Mammary epithelial cell (primary cell): ENCODE measurements at regions of chr21 and their contacts with region 1.

Region 1: GRCh38 chr21:33924079-33924765 is 8.6 kb upstream of the ATP5PO start:
- DNase-seq: peak; percentile 52
- H3K4me3 ChIP-seq: no peak overlapping the region
- H3K27ac ChIP-seq: no peak overlapping the region
- H3K4me1 ChIP-seq: peaks cover 9% of the 10 kb centered on the region
- H3K27me3 ChIP-seq: no peaks in the 10 kb centered on the region
- CTCF ChIP-seq: peak; percentile 92 to 95

Region 2: DNA sequence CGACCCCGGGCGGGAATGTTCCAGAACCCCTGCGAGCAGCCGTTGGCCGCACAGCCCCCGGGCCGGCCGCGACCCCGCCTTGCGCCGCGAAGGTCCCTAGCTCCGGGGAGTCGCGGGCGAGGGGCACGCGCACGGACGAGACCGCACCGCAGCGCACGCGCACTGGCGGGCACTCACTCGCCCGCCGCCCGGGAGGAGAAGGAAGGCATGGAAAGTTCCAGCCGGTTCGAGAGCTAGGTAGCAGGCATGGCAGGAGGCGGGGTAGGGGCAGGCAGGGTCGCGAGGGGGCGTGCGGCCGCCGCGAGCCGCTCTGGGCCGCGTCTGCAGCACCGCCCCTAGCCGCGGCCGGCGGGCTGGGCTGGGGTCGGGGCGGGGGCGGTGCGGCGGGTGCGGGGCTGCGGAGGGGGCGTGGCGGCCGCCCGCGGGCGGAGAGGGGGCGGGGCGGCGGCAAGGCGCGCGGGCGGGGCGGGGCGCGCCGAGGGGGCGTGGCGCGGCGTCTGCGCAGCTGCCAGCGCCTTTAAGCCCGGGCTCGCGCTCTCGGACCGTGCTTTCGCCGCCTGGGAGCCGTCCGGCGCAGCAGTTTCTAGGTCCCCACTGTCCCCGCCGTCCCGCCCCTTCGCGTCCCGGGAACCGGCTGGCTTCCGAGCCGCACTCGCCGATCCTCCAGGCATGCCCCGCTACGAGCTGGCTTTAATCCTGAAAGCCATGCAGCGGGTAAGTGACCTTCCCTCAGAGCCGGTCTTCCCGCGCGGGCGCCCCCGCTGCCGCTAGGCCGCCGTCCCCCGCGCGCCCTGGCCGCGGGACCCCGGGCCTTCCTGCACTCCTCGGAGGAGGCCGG is 149.0 kb after region 1 on chr21 and contains the starts of genes MRPS6 and SLC5A3:
- CTCF ChIA-PET with region 1: no interaction called
- dilution Hi-C with region 1: no loop called
- in situ Hi-C with region 1: no loop called
- intact Hi-C with region 1: loop called (anchors 2 kb)
- DNase-seq: peak; percentile 76
- H3K4me3 ChIP-seq: peak within 1 kb of the TSS; percentile 88 to 90 (median 88)
- H3K27ac ChIP-seq: peak within 1 kb of the TSS; percentile 75
- H3K4me1 ChIP-seq: peaks cover 21% of the 10 kb centered on the region
- H3K27me3 ChIP-seq: no peaks in the 10 kb centered on the region
- CTCF ChIP-seq: no peak
- total RNA-seq, gene MRPS6: 10.2 to 65.9 TPM
- total RNA-seq, gene SLC5A3: 10.8 to 17.5 TPM

Region 3: DNA sequence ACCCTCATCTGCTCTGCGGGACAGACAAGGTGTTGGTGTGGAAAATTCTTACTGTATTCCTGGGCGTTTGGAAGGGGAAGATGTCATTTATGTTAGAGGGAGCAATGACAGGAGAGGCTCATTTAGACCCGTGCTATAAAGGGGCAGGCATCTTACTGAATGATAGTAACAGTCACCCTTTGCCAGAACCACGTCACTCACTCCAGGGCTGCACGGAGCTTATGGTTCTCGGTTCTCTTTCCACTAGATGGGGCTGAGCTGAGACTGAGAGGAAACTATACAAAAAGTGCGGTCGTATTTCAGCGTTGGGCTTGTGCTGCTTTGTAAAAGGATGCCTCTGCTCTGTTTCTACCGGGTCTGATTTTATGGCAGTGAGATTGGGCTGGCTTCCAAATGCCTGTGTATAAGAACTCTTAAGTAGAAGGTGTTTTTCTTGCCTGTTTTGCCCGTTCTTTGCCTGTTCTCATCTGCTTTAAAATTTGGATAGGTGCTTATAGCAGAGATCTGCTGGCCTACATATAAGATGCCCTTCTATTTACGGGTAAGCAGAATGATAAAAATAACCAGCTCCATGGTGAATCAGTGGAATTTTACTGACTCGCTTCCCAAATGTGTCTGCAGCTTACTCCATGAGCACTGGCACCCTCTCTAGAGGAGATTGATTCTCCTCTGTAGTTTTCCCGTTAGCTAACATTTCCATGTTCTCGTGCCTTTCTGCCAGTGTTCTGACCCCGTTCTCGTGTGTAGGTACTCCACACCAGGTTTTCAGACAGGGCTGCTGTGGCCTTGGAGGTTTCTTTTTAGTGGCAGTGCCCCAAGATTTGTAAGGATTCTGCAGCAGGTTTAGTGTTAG is 205.0 kb after region 1 on chr21:
- CTCF ChIA-PET with region 1: no interaction called
- dilution Hi-C with region 1: no loop called
- in situ Hi-C with region 1: no loop called
- intact Hi-C with region 1: loop called (anchors 5 kb)
- DNase-seq: peak; percentile 41
- H3K4me3 ChIP-seq: no peak overlapping the region
- H3K27ac ChIP-seq: peak overlapping the region; percentile 38
- H3K4me1 ChIP-seq: peaks cover 40% of the 10 kb centered on the region
- H3K27me3 ChIP-seq: no peaks in the 10 kb centered on the region
- CTCF ChIP-seq: peak; percentile 46 to 55

Region 4: GRCh38 chr21:34202553-34203372 is 278.5 kb after region 1 on chr21:
- CTCF ChIA-PET with region 1: interaction called, 4 read pairs
- dilution Hi-C with region 1: no loop called
- in situ Hi-C with region 1: no loop called
- intact Hi-C with region 1: loop called (anchors 2 kb)
- DNase-seq: no peak
- H3K4me3 ChIP-seq: no peak overlapping the region
- H3K27ac ChIP-seq: no peak overlapping the region
- H3K4me1 ChIP-seq: peaks cover 4% of the 10 kb centered on the region
- H3K27me3 ChIP-seq: no peaks in the 10 kb centered on the region
- CTCF ChIP-seq: no peak

Region 5: GRCh38 chr21:34243562-34243961 is 319.3 kb after region 1 on chr21:
- CTCF ChIA-PET with region 1: interaction called, 10 read pairs
- dilution Hi-C with region 1: no loop called
- in situ Hi-C with region 1: loop called (anchors 10 to 25 kb)
- intact Hi-C with region 1: no loop called
- DNase-seq: peak; percentile 16
- H3K4me3 ChIP-seq: no peak overlapping the region
- H3K27ac ChIP-seq: no peak overlapping the region
- H3K4me1 ChIP-seq: no peaks in the 10 kb centered on the region
- H3K27me3 ChIP-seq: no peaks in the 10 kb centered on the region
- CTCF ChIP-seq: peak; percentile 55 to 74

Region 6: GRCh38 chr21:34351786-34352241 is 427.6 kb after region 1 on chr21:
- CTCF ChIA-PET with region 1: interaction called, 13 read pairs
- dilution Hi-C with region 1: no loop called
- in situ Hi-C with region 1: no loop called
- intact Hi-C with region 1: loop called (anchors 1 kb)
- DNase-seq: no peak
- H3K4me3 ChIP-seq: no peak overlapping the region
- H3K27ac ChIP-seq: no peak overlapping the region
- H3K4me1 ChIP-seq: no peaks in the 10 kb centered on the region
- H3K27me3 ChIP-seq: peaks cover 2% of the 10 kb centered on the region
- CTCF ChIP-seq: peak; percentile 38 to 55

Region 7: GRCh38 chr21:34630536-34631143 is 706.4 kb after region 1 on chr21:
- CTCF ChIA-PET with region 1: no interaction called
- dilution Hi-C with region 1: no loop called
- in situ Hi-C with region 1: no loop called
- intact Hi-C with region 1: loop called (anchors 5 kb)
- DNase-seq: peak; percentile 42
- H3K4me3 ChIP-seq: no peak overlapping the region
- H3K27ac ChIP-seq: no peak overlapping the region
- H3K4me1 ChIP-seq: no peaks in the 10 kb centered on the region
- H3K27me3 ChIP-seq: peaks cover 5% of the 10 kb centered on the region
- CTCF ChIP-seq: peak; percentile 71 to 81